RWPE1 (cell line): ENCODE measurements at regions of chr5 and their contacts with region 1.

Region 1: GRCh38 chr5:169084775-169085174 is 216.2 kb downstream of the SLIT3 start:
- DNase-seq: no peak
- H3K27ac ChIP-seq: no peak overlapping the region
- CTCF ChIP-seq: no peak

Region 2: GRCh38 chr5:169897481-169897880 is 812.7 kb after region 1 on chr5:
- CTCF ChIA-PET with region 1: no interaction called
- POLR2A ChIA-PET with region 1: interaction called, 13 read pairs
- DNase-seq: no peak
- H3K27ac ChIP-seq: no peak overlapping the region
- CTCF ChIP-seq: no peak